A673 (cell line): ENCODE measurements at regions of chr14 and their contacts with region 1.

Region 1: GRCh38 chr14:23562268-23563203 is 5.1 kb downstream of the AP1G2 start:
- DNase-seq: peak; percentile 75
- H3K4me3 ChIP-seq: no peak overlapping the region
- H3K27ac ChIP-seq: no peak overlapping the region
- H3K4me1 ChIP-seq: peaks cover 3% of the 10 kb centered on the region
- H3K27me3 ChIP-seq: no peaks in the 10 kb centered on the region
- CTCF ChIP-seq: peak; percentile 87

Region 2: GRCh38 chr14:23478111-23478759 is 84.3 kb before region 1 on chr14:
- CTCF ChIA-PET with region 1: interaction called, 29 read pairs
- POLR2A ChIA-PET with region 1: interaction called, 5 read pairs
- intact Hi-C with region 1: loop called (anchors 1 kb)
- DNase-seq: peak; percentile 77
- H3K4me3 ChIP-seq: no peak overlapping the region
- H3K27ac ChIP-seq: peak overlapping the region; percentile 17
- H3K4me1 ChIP-seq: no peaks in the 10 kb centered on the region
- H3K27me3 ChIP-seq: no peaks in the 10 kb centered on the region
- CTCF ChIP-seq: peak; percentile 83